WTC11 (cell line): ENCODE measurements at regions of chr20 and their contacts with region 1.

Region 1: GRCh38 chr20:54199721-54200176 is 8.1 kb upstream of the PFDN4 start:
- DNase-seq: peak; percentile 83
- ATAC-seq: peak; percentile 65
- H3K4me3 Mint-ChIP-seq: no peak overlapping the region
- H3K27ac Mint-ChIP-seq: no peak overlapping the region
- H3K4me1 Mint-ChIP-seq: peaks cover 18% of the 10 kb centered on the region
- H3K27me3 Mint-ChIP-seq: no peaks in the 10 kb centered on the region
- CTCF ChIP-seq: peak; percentile 69; the same call in 1 of the 2 replicates

Region 2: DNA sequence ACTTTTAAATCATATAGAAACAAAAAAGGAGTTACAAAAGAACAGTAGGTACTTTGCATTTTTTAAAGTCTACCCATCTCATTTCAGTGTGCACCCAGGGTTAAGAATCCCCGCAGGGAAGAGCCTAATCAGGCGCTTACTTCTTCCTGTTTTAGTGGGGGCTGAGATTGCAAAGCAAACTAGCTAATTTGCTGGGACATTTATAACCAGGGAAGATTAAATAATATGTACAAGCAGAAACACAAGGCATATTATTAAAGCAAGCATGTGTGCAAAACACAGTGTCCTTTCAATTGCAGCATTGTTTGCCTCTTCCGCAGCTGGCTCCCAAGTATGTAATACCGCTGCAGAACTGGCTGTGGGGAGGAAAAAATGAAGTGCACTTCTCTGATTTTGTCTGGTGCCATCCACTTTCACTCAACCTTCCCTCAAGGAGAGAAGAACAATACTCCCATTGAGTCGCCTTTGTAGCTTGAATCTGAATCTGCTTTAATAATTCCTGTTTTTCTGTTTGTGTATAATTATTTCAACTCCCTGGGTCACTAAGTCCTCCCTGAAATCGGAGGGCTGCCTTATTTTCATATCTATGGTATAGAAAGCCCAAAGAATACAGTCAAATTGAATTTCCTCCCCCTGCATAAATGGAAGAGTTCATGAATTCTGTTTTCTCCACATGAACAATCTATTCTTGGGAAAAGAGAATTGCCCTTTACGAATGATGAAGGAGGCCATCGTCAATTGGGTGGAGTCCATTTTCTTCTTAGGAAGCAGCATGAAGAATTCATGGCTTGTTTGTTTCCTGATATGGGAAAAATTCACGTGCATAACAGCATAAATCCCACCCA is 106.1 kb before region 1 on chr20:
- CTCF ChIA-PET with region 1: interaction called, 38 read pairs
- POLR2A ChIA-PET with region 1: no interaction called
- DNase-seq: no peak
- ATAC-seq: no peak
- H3K4me3 Mint-ChIP-seq: no peak overlapping the region
- H3K27ac Mint-ChIP-seq: no peak overlapping the region
- H3K4me1 Mint-ChIP-seq: no peaks in the 10 kb centered on the region
- H3K27me3 Mint-ChIP-seq: peaks cover 3% of the 10 kb centered on the region; the same call in 1 of the 2 replicates
- CTCF ChIP-seq: no peak

Region 3: DNA sequence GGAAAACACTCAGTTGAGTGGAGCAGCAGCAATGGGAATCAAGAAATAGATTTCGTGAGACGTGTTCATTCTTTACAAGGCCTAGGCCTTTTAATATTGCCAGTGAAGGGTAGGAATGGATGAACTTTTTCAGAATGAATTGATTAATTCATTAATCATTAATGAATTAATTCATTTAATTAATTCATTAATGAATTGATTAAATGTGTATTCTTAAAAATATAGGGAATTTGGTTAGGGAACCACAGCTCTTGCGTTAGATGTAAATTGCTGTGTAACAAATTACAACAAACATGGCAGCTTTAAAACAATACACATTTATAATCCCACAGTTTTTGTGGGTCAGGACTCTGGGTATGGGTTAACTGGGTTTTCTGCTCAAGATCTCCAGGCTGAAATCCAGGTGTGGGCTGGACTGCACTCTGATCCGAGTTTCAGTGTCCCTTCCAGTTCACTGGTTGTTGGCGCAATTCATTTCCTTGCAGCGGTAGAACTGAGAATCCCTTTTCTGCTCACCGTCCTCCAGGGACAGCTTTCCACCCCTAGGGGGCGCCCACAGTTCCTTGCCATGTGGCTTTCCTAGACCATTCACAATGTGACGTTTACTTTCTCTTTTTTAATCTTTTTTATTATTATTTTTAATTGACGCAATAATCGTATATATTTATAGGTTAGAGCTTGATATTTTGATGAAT is 96.5 kb before region 1 on chr20:
- CTCF ChIA-PET with region 1: interaction called, 38 read pairs
- POLR2A ChIA-PET with region 1: no interaction called
- DNase-seq: peak; percentile 88
- ATAC-seq: peak; percentile 90
- H3K4me3 Mint-ChIP-seq: no peak overlapping the region
- H3K27ac Mint-ChIP-seq: no peak overlapping the region
- H3K4me1 Mint-ChIP-seq: peaks cover 5% of the 10 kb centered on the region
- H3K27me3 Mint-ChIP-seq: peaks cover 3% of the 10 kb centered on the region
- CTCF ChIP-seq: peak; percentile 94

Region 4: GRCh38 chr20:54649511-54649962 is 449.8 kb after region 1 on chr20:
- CTCF ChIA-PET with region 1: interaction called, 10 read pairs
- POLR2A ChIA-PET with region 1: no interaction called
- DNase-seq: peak; percentile 86
- ATAC-seq: peak; percentile 72
- H3K4me3 Mint-ChIP-seq: no peak overlapping the region
- H3K27ac Mint-ChIP-seq: no peak overlapping the region
- H3K4me1 Mint-ChIP-seq: no peaks in the 10 kb centered on the region
- H3K27me3 Mint-ChIP-seq: no peaks in the 10 kb centered on the region
- CTCF ChIP-seq: peak; percentile 57